ENCODE measurements at regions of chr22 and their contacts with region 1.

Region 1: DNA sequence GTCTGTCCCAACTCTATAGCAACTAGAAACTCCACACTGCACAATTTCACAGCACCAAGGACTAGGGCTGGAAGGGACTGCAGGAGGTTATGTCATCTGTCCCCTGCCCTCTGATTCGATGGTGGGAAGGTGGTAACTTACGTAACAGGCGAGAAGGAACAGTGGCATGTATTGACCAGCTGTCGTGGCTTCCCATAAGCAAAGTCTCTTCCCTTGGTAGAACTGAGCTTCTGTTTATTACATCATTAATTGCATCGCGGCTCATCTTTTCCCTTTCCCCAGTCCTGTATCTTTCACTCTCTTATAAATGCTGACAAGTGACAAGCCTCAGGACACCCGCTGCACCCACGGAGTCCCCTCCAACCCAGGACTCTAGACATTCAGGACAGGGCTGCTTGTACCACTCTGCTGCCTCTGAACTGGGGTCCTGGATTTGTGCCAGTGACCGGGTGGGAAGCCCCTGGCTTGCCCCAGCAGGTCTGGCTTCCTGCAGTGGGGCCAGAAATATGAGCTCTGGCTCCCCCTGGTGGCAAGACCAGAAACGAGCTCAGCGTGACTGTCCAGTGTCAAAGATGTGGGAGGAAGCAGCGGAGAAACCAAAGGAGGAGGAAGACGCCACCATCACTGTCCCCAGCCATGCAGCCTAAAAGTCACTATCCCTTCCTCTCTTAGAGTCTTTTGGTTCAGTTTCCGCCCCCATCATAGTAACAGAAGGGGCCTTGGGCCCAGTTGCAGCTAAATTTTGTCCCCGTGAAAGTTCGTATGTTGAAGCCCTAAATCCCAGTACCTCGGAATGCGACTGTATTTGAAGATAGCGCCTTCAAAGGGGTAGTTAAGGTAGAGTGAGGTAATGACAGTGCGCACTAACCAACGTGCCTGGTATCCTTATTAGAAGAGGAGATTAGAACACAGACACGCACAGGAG is 84.5 kb downstream of the ISX start:
- DNase-seq: peak; percentile 58 to 94
- H3K4me3 ChIP-seq: no peak overlapping the region
- H3K27ac ChIP-seq: no peak overlapping the region
- H3K4me1 ChIP-seq: peaks cover 0 to 7% (median 1%) of the 10 kb centered on the region in 4 experiments; a peak in 4 of 7 replicates
- H3K27me3 ChIP-seq: 0 out of 7 replicates have a peak, but pooled peaks cover 0 to 4% (median 0%) of the 10 kb centered on the region in 4 experiments
- CTCF ChIP-seq: peak; percentile 74 to 91 (median 83)
- EP300 ChIP-seq: no peak
- POLR2A ChIP-seq: no peak
- RAD21 ChIP-seq: peak; percentile 76 to 84

Region 2: DNA sequence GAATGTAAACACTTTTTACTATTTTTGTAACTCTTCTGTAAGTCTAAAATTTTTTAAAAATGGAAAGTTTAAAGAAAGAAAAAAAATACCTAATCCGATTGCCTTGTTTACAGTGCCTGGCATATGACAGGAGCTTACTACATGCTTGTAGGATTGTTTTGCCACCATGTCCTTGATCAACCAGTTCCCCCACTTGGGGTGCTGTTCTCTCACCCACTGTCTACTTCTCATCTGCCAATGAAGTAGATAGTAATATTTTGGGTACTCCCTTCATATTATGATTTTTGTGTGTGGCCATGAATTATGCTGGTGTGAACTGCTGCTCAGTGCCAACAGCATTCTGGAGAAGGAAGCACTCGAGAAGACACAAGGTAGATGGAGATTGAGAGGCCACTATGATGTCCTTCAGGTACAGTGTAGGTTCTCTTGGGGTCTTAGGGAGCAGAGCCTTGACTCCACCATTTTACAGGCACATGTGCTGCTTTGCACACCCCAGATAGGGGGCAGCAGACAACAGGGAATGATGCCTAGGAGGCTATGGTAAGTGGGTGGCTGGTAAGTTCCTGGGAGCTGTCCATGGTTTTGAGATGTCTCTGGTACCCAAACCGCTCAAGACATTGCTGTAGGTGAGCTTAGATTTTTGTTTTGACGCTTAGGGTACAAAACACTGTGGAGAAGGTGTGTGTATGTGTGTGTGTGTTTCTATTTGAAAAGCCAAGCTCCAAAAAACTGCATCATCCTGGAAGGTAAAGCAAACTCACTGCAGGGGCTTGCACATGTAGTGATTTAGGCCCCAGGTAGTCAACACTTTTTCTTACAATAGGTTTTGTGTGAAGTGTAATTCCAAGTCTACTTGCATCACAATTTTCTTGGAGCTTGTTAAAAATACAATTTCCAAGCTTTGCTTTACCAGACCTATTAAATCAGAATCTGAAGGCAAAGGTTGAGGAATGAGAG is 735.7 kb before region 1 on chr22:
- CTCF ChIA-PET with region 1: interaction called, 16 read pairs
- POLR2A ChIA-PET with region 1: no interaction called
- DNase-seq: peak; percentile 68 to 77
- H3K4me3 ChIP-seq: no peak overlapping the region
- H3K27ac ChIP-seq: no peak overlapping the region
- H3K4me1 ChIP-seq: no peaks in the 10 kb centered on the region
- H3K27me3 ChIP-seq: no peaks in the 10 kb centered on the region
- CTCF ChIP-seq: peak; percentile 94 to 98 (median 96)
- EP300 ChIP-seq: no peak
- POLR2A ChIP-seq: no peak
- RAD21 ChIP-seq: peak; percentile 100

Region 3: GRCh38 chr22:35043252-35043931 is 107.1 kb before region 1 on chr22:
- CTCF ChIA-PET with region 1: interaction called, 14 read pairs
- POLR2A ChIA-PET with region 1: no interaction called
- DNase-seq: no peak
- H3K4me3 ChIP-seq: no peak overlapping the region
- H3K27ac ChIP-seq: no peak overlapping the region
- H3K4me1 ChIP-seq: peaks cover 0 to 3% (median 1%) of the 10 kb centered on the region in 4 experiments; a peak in 1 of 7 replicates
- H3K27me3 ChIP-seq: no peaks in the 10 kb centered on the region
- CTCF ChIP-seq: peak; percentile 46 to 59 (median 52)
- EP300 ChIP-seq: no peak
- POLR2A ChIP-seq: no peak
- RAD21 ChIP-seq: peak; percentile 55 to 64

Region 4: DNA sequence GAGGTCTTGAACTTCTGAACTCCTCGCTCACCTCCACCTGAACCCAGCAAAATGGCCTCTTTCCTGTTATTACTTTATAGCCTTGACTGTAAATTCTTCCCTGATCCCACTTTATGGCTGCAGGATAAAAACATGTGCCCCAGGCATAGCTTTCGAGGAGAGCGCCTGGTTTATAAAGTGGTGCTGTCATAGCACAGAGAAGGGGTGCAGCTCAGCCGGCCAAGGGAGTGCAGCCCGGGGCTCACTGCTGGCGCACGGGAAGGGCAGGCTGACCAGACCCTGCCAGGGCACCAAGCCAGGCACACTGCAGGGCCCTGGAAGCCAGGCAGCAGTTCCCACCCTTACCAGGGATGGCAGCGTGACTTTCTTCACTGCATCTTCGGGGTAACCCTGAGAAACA is 33.6 kb before region 1 on chr22:
- CTCF ChIA-PET with region 1: interaction called, 21 read pairs
- POLR2A ChIA-PET with region 1: interaction called, 3 read pairs
- DNase-seq: no peak
- H3K4me3 ChIP-seq: no peak overlapping the region
- H3K27ac ChIP-seq: no peak overlapping the region
- H3K4me1 ChIP-seq: no peaks in the 10 kb centered on the region
- H3K27me3 ChIP-seq: no peaks in the 10 kb centered on the region
- CTCF ChIP-seq: peak in 2 of 3 experiments; percentile 50 to 57; a peak in 2 of 4 replicates
- EP300 ChIP-seq: no peak
- POLR2A ChIP-seq: no peak
- RAD21 ChIP-seq: no peak

Region 5: DNA sequence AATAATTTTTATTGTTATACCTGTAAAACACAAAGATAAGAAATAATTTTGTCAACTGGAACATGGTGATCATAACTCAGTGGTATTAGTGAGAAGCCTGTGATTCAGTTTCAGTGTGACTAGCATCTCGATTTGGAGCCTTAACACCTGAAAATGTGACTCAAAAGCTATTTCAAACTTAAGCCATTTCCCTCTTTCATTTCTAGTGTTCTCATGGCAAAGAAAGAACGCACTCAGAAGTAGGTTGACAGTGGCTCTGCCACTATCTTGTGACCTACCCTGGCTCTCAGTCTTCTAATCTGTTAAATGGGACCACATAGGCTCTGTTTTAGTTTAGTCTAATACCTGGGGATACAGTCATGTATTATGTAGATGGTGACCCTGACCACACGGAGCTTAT is 21.8 kb before region 1 on chr22:
- CTCF ChIA-PET with region 1: interaction called, 19 read pairs
- POLR2A ChIA-PET with region 1: no interaction called
- DNase-seq: no peak
- H3K4me3 ChIP-seq: no peak overlapping the region
- H3K27ac ChIP-seq: no peak overlapping the region
- H3K4me1 ChIP-seq: peaks cover 0 to 6% (median 2%) of the 10 kb centered on the region in 4 experiments; a peak in 1 of 7 replicates
- H3K27me3 ChIP-seq: no peaks in the 10 kb centered on the region
- CTCF ChIP-seq: no peak
- EP300 ChIP-seq: no peak
- POLR2A ChIP-seq: no peak
- RAD21 ChIP-seq: no peak

Region 6: GRCh38 chr22:35177811-35178210 is 27.4 kb after region 1 on chr22:
- CTCF ChIA-PET with region 1: interaction called, 14 read pairs
- POLR2A ChIA-PET with region 1: no interaction called
- DNase-seq: no peak
- H3K4me3 ChIP-seq: no peak overlapping the region
- H3K27ac ChIP-seq: no peak overlapping the region
- H3K4me1 ChIP-seq: peaks cover 0 to 2% (median 0%) of the 10 kb centered on the region in 4 experiments; a peak in 1 of 7 replicates
- H3K27me3 ChIP-seq: no peaks in the 10 kb centered on the region
- CTCF ChIP-seq: peak; percentile 47 to 56 (median 54)
- EP300 ChIP-seq: no peak
- POLR2A ChIP-seq: no peak
- RAD21 ChIP-seq: peak; percentile 18 to 42; a peak in 2 of 4 replicates

Region 7: GRCh38 chr22:35231585-35232084 is 81.2 kb after region 1 on chr22:
- CTCF ChIA-PET with region 1: interaction called, 87 read pairs
- POLR2A ChIA-PET with region 1: no interaction called
- DNase-seq: peak; percentile 68 to 91
- H3K4me3 ChIP-seq: no peak overlapping the region
- H3K27ac ChIP-seq: no peak overlapping the region
- H3K4me1 ChIP-seq: peaks cover 0 to 3% (median 2%) of the 10 kb centered on the region in 4 experiments; a peak in 2 of 7 replicates
- H3K27me3 ChIP-seq: no peaks in the 10 kb centered on the region; a peak in 1 of 7 replicates
- CTCF ChIP-seq: peak; percentile 87 to 99 (median 98)
- EP300 ChIP-seq: no peak
- POLR2A ChIP-seq: no peak
- RAD21 ChIP-seq: peak; percentile 93 to 94

Measured in H1 (cell line).